ENCODE measurements at regions of chr1 and their contacts with region 1.

Region 1: GRCh38 chr1:26602378-26602959 is 72.9 kb downstream of the RPS6KA1 start:
- DNase-seq: no peak
- ATAC-seq: peak; percentile 64
- H3K4me3 ChIP-seq: no peak overlapping the region
- H3K27ac ChIP-seq: no peak overlapping the region
- H3K4me1 ChIP-seq: peaks cover 10% of the 10 kb centered on the region
- H3K27me3 ChIP-seq: no peaks in the 10 kb centered on the region
- CTCF ChIP-seq: peak; percentile 77 to 86 (median 79)
- EP300 ChIP-seq: no peak
- POLR2A ChIP-seq: no peak
- RAD21 ChIP-seq: peak; percentile 99

Region 2: DNA sequence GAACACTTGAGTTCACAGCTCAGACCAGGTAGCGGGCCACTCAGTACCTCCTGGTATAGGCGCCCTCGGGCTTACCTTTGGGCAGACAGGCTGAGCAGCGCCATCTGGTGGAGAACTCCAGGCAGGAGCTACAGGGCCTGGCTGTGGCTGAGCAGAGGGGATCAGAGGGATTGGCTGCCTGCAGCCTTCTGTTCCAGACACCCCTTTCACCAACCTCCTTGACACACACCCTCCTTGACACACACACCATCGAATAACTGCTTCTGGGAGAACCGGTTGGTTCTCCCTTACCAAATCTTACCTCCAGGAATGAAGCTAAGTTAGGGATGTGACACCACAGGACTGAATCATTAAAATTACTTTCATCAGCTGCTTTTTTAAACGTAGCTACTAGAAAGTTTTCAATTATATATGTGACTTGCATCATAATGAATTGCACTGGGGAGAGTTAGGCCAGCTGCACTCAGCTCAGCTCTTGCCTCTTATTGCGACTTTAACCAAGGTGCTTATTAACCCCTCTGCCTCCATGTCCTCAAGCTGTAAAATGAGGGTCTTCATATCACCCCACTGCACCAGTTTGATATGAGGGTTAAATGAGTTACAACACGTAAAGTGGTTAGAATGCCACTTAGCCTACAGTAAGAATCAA is 185.2 kb before region 1 on chr1:
- CTCF ChIA-PET with region 1: no interaction called
- POLR2A ChIA-PET with region 1: no interaction called
- RAD21 ChIA-PET with region 1: no interaction called
- SMC1A ChIA-PET with region 1: no interaction called
- in situ Hi-C with region 1: no loop called
- intact Hi-C with region 1: no loop called
- DNase-seq: no peak
- ATAC-seq: peak; percentile 100
- H3K4me3 ChIP-seq: no peak overlapping the region
- H3K27ac ChIP-seq: no peak overlapping the region
- H3K4me1 ChIP-seq: no peaks in the 10 kb centered on the region
- H3K27me3 ChIP-seq: peaks cover 0 to 3% of the 10 kb centered on the region in 2 experiments; a peak in 3 of 4 replicates
- CTCF ChIP-seq: peak; percentile 87 to 97 (median 92)
- EP300 ChIP-seq: no peak
- POLR2A ChIP-seq: no peak
- RAD21 ChIP-seq: peak; percentile 71

Region 3: GRCh38 chr1:26541816-26542711 is 60.4 kb before region 1 on chr1:
- CTCF ChIA-PET with region 1: interaction called, 58 read pairs
- POLR2A ChIA-PET with region 1: interaction called, 3 read pairs
- RAD21 ChIA-PET with region 1: interaction called, 27 read pairs
- SMC1A ChIA-PET with region 1: interaction called, 53 read pairs
- in situ Hi-C with region 1: no loop called
- intact Hi-C with region 1: loop called (anchors 5 kb)
- DNase-seq: peak; percentile 88
- ATAC-seq: peak; percentile 76
- H3K4me3 ChIP-seq: peak overlapping the region; percentile 95
- H3K27ac ChIP-seq: peak overlapping the region; percentile 97
- H3K4me1 ChIP-seq: peaks cover 68% of the 10 kb centered on the region
- H3K27me3 ChIP-seq: no peaks in the 10 kb centered on the region
- CTCF ChIP-seq: peak; percentile 52 to 82 (median 71)
- EP300 ChIP-seq: peak in 1 of 2 experiments; percentile 59; a peak in 3 of 4 replicates
- POLR2A ChIP-seq: peak; percentile 80
- RAD21 ChIP-seq: no peak; the same call in 1 of the 2 replicates

Region 4: DNA sequence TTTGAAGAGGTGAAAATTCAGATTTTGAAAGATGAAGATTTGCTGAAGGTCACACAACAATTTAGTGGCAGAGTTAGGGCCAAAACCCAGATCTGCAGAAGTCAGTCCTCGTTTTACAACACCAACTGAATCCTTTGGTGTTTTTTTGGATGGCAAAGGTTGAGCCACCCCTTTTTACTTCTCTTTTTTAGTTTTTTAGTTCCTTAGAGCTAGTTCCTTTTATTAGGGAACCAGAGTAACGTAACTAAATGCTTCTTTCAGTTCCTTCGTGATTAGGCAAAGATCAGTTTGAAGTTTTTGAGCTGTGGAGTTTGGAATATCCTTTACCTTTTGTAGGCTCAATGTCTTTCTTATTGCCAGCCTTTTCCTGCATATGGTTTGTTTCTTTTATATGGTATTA is 25.5 kb after region 1 on chr1:
- CTCF ChIA-PET with region 1: interaction called, 18 read pairs
- POLR2A ChIA-PET with region 1: no interaction called
- RAD21 ChIA-PET with region 1: interaction called, 4 read pairs
- SMC1A ChIA-PET with region 1: interaction called, 6 read pairs
- in situ Hi-C with region 1: no loop called
- intact Hi-C with region 1: no loop called
- DNase-seq: no peak
- ATAC-seq: peak; percentile 60
- H3K4me3 ChIP-seq: no peak overlapping the region
- H3K27ac ChIP-seq: peak overlapping the region; percentile 64
- H3K4me1 ChIP-seq: peaks cover 11% of the 10 kb centered on the region
- H3K27me3 ChIP-seq: no peaks in the 10 kb centered on the region
- CTCF ChIP-seq: no peak
- EP300 ChIP-seq: no peak
- POLR2A ChIP-seq: no peak
- RAD21 ChIP-seq: no peak

Region 5: DNA sequence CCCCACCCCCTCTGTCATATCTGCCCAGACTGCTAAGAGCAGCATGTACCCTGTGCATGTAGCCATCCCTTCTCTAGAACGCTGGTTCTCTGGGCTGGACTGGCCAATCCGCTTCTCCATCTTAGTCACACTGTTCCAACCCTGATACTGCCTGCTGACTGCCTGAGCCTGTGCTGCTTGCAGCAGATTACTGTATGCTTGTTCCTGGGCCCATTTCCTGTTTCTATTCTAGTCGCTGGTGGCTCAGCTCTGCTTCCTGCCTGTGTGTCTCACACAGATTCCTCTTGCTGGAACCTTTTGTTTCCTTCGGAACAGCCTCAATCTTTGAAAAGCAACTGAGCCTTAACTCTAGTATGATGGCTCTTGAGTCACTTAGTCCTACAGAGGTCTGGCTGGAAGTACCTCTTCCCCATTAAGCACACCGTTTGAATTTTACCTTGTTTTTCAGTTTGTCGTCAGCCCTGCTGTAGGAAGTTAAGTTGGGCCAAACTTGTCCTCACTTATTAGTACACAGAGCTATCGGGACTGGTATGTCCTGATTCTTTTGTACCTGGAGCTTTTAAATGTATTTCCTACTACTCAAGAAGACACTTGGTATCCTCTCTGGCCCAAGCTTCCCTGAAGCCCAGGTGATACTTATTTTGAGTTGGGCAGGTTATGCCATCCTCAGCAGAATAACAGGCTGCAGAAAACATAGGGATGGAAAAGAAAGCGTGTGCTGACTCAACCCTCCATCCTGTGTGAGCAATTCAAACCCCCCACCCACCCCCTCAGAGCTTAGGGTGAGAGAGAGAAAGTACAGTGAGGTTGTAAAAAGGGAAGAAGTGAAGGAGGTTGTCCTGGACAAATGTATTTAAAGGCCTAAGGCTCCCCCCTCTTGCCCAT is 141.8 kb after region 1 on chr1:
- CTCF ChIA-PET with region 1: interaction called, 15 read pairs
- POLR2A ChIA-PET with region 1: interaction called, 7 read pairs
- RAD21 ChIA-PET with region 1: interaction called, 3 read pairs
- SMC1A ChIA-PET with region 1: interaction called, 29 read pairs
- in situ Hi-C with region 1: no loop called
- intact Hi-C with region 1: no loop called
- DNase-seq: peak; percentile 99
- ATAC-seq: peak; percentile 100
- H3K4me3 ChIP-seq: peak overlapping the region; percentile 65; the same call in 1 of the 2 replicates
- H3K27ac ChIP-seq: peak overlapping the region; percentile 96
- H3K4me1 ChIP-seq: peaks cover 47% of the 10 kb centered on the region
- H3K27me3 ChIP-seq: no peaks in the 10 kb centered on the region
- CTCF ChIP-seq: no peak
- EP300 ChIP-seq: peak in 1 of 2 experiments; percentile 80; a peak in 1 of 4 replicates
- POLR2A ChIP-seq: peak; percentile 72
- RAD21 ChIP-seq: no peak; the same call in 1 of the 2 replicates

Region 6: DNA sequence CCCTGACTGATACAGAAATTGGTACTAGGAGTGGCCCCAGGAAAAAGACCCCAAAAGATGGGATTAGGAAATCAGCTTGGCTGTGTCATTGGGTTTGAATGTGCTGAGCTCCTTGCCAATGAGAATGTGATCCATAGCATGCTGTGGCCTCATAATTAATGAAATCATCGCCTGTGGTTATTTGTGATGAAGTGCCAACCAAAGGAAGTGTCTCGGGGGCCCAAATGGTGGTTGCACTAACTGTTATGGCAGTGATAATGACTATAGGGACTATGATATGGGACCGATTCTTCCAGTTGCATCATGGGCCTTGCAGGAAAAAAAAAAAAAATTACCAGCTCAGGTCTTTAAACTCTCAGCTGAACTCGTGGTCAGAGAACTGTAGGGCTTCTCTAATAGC is 208.6 kb after region 1 on chr1:
- CTCF ChIA-PET with region 1: interaction called, 38 read pairs
- POLR2A ChIA-PET with region 1: interaction called, 5 read pairs
- RAD21 ChIA-PET with region 1: interaction called, 8 read pairs
- SMC1A ChIA-PET with region 1: interaction called, 22 read pairs
- in situ Hi-C with region 1: no loop called
- intact Hi-C with region 1: no loop called
- DNase-seq: no peak
- ATAC-seq: 0 out of 3 replicates have a peak, but pooled peaks have one; percentile 20
- H3K4me3 ChIP-seq: no peak overlapping the region
- H3K27ac ChIP-seq: no peak overlapping the region
- H3K4me1 ChIP-seq: no peaks in the 10 kb centered on the region
- H3K27me3 ChIP-seq: no peaks in the 10 kb centered on the region
- CTCF ChIP-seq: no peak
- EP300 ChIP-seq: no peak
- POLR2A ChIP-seq: no peak
- RAD21 ChIP-seq: no peak

Region 7: DNA sequence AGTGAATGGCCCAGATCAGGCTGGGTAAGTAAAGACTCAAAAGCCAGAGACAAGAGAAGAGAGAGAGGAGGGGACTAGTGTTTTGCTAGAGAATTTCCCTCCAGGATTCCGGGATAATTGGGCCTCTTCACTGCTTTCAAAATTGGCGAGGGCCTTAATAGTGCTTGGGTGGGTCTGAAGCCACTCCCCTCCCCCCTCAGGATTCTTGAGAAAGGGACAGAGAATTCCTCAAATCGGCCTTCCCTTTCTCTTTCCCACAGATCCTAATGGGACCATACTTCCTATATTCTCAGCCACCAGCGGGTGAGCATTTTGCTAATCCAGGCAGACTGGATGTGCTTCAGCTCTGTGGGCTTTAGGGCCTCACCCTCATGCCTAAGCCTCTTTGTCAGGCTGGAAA is 272.4 kb after region 1 on chr1:
- CTCF ChIA-PET with region 1: interaction called, 6 read pairs
- POLR2A ChIA-PET with region 1: interaction called, 4 read pairs
- RAD21 ChIA-PET with region 1: interaction called, 3 read pairs
- SMC1A ChIA-PET with region 1: interaction called, 11 read pairs
- in situ Hi-C with region 1: loop called (anchors 5 kb)
- intact Hi-C with region 1: loop called (anchors 1 kb)
- DNase-seq: no peak
- ATAC-seq: no peak
- H3K4me3 ChIP-seq: no peak overlapping the region
- H3K27ac ChIP-seq: no peak overlapping the region
- H3K4me1 ChIP-seq: no peaks in the 10 kb centered on the region
- H3K27me3 ChIP-seq: no peaks in the 10 kb centered on the region
- CTCF ChIP-seq: no peak
- EP300 ChIP-seq: no peak
- POLR2A ChIP-seq: no peak
- RAD21 ChIP-seq: no peak